CD4-positive, alpha-beta T cell (primary cell): ENCODE measurements at regions of chr5 and their contacts with region 1.

Region 1: GRCh38 chr5:127564002-127564769 is 46.7 kb downstream of the PRRC1 start:
- DNase-seq: peak in 10 of 14 experiments; percentile 14 to 76 (median 40)
- ATAC-seq: peak; percentile 73
- H3K4me3 ChIP-seq: no peak overlapping the region
- H3K4me3 Mint-ChIP-seq: no peak overlapping the region
- H3K27ac ChIP-seq: no peak overlapping the region
- H3K27ac Mint-ChIP-seq: no peak overlapping the region
- H3K4me1 ChIP-seq: no peaks in the 10 kb centered on the region
- H3K4me1 Mint-ChIP-seq: no peaks in the 10 kb centered on the region
- H3K27me3 ChIP-seq: peaks cover 0 to 5% of the 10 kb centered on the region in 2 experiments
- H3K27me3 Mint-ChIP-seq: peaks cover 26% of the 10 kb centered on the region
- CTCF ChIP-seq: peak; percentile 83

Region 2: DNA sequence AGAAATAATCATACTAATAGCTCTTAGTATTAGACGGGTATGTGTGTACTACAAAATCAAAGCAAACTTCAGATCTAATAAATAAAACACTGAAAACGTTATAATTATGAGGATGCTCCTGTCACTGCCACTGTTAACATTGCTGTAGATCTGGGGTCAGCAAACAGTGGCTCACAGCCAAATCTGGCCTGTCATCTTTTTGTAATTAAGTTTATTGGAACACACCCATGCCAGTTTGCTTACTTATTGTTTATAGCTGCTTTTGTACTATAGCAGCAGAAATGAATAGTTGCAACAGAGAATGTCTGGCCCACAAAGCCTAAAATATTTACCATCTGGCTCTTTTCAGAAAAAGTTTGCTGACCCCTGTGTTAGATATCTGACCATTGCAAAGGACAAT is 14.7 kb before region 1 on chr5:
- CTCF ChIA-PET with region 1: no interaction called
- POLR2A ChIA-PET with region 1: no interaction called
- intact Hi-C with region 1: no loop called
- DNase-seq: no peak
- ATAC-seq: no peak
- H3K4me3 ChIP-seq: no peak overlapping the region
- H3K4me3 Mint-ChIP-seq: no peak overlapping the region
- H3K27ac ChIP-seq: no peak overlapping the region
- H3K27ac Mint-ChIP-seq: no peak overlapping the region
- H3K4me1 ChIP-seq: no peaks in the 10 kb centered on the region
- H3K4me1 Mint-ChIP-seq: peaks cover 11% of the 10 kb centered on the region
- H3K27me3 ChIP-seq: no peaks in the 10 kb centered on the region
- H3K27me3 Mint-ChIP-seq: no peaks in the 10 kb centered on the region
- CTCF ChIP-seq: no peak

Region 3: DNA sequence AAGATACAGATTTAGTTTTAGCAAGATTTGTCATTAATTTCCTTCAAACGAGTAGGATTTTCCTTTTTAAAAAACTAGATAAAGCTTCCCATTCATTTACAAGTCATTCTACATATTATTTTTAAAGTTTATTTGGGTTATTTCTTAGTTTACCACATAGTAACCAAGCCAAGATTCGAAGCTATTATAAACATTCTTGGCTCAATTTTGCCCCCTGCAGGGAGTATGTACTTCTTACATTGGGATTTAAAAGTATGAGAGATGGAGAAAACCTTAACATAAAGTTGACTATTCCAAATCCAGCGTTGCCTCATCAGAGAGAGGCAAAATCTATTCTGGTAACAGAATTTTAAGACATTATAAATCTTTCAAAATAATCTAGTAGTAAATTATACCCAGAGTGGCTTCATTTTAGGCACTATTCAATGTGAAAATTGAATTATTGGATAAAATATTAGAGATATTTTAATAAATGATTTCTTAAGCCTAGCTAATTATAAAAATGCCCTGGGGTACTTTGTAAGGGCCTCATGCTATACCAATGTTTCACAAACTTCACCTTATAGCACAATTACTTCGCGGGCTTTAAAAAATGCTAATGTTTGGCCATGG is 934.8 kb after region 1 on chr5:
- CTCF ChIA-PET with region 1: no interaction called
- POLR2A ChIA-PET with region 1: no interaction called
- intact Hi-C with region 1: loop called (anchors 2 to 5 kb)
- DNase-seq: peak in 2 of 14 experiments; percentile 5 to 7
- ATAC-seq: no peak
- H3K4me3 ChIP-seq: no peak overlapping the region
- H3K4me3 Mint-ChIP-seq: no peak overlapping the region
- H3K27ac ChIP-seq: no peak overlapping the region
- H3K27ac Mint-ChIP-seq: no peak overlapping the region
- H3K4me1 ChIP-seq: no peaks in the 10 kb centered on the region
- H3K4me1 Mint-ChIP-seq: no peaks in the 10 kb centered on the region
- H3K27me3 ChIP-seq: no peaks in the 10 kb centered on the region
- H3K27me3 Mint-ChIP-seq: no peaks in the 10 kb centered on the region
- CTCF ChIP-seq: no peak

Region 4: DNA sequence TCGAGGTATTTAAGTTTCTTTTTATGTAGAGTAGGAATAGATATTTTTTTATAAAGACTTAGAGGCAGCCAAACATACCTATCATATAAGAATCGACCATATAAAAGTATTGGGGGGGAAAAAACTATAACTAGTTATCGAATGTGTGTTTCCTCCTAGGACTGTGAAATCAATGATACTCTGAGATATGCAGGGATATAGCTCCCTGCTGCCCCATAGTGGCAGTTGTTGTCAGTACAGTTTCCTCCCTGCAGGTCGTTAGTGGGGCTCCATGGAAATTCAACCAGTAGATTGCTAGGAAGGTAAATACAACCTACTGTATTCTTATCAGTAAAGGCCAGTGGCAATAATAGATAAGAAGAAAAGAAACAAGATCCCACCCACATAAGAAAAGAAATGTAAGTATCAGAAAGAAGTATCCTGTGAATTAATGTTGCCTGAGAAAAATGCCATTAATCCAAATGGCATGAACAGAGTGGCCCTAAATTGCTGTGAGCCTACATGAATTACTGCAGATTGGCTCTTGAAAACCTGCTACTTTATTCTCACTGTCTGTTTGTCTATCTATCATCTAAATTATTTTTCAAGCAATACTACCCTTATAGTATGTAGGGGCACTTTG is 1110.8 kb after region 1 on chr5:
- CTCF ChIA-PET with region 1: no interaction called
- POLR2A ChIA-PET with region 1: no interaction called
- intact Hi-C with region 1: loop called in 1 of 2 experiments (anchors 5 kb)
- DNase-seq: peak in 7 of 14 experiments; percentile 4 to 43 (median 11)
- ATAC-seq: no peak
- H3K4me3 ChIP-seq: no peak overlapping the region
- H3K4me3 Mint-ChIP-seq: no peak overlapping the region
- H3K27ac ChIP-seq: no peak overlapping the region
- H3K27ac Mint-ChIP-seq: no peak overlapping the region
- H3K4me1 ChIP-seq: no peaks in the 10 kb centered on the region
- H3K4me1 Mint-ChIP-seq: no peaks in the 10 kb centered on the region
- H3K27me3 ChIP-seq: no peaks in the 10 kb centered on the region
- H3K27me3 Mint-ChIP-seq: no peaks in the 10 kb centered on the region
- CTCF ChIP-seq: peak; percentile 51

Region 5: GRCh38 chr5:129125810-129126209 is 1561.6 kb after region 1 on chr5:
- CTCF ChIA-PET with region 1: interaction called, 4 read pairs
- POLR2A ChIA-PET with region 1: no interaction called
- intact Hi-C with region 1: loop called in 1 of 2 experiments (anchors 10 kb)
- DNase-seq: peak in 3 of 14 experiments; percentile 14 to 41 (median 22)
- ATAC-seq: peak; percentile 17
- H3K4me3 ChIP-seq: peak overlapping the region; percentile 17
- H3K4me3 Mint-ChIP-seq: peak overlapping the region; percentile 36
- H3K27ac ChIP-seq: peak overlapping the region in 1 of 2 donors; percentile 12
- H3K27ac Mint-ChIP-seq: peak overlapping the region; percentile 82
- H3K4me1 ChIP-seq: peaks cover 5% of the 10 kb centered on the region
- H3K4me1 Mint-ChIP-seq: peaks cover 12% of the 10 kb centered on the region
- H3K27me3 ChIP-seq: no peaks in the 10 kb centered on the region
- H3K27me3 Mint-ChIP-seq: no peaks in the 10 kb centered on the region
- CTCF ChIP-seq: no peak